Panc1 (cell line): ENCODE measurements at regions of chr19 and their contacts with region 1.

Region 1: GRCh38 chr19:47225746-47226425 is 5.1 kb downstream of the BBC3 start:
- DNase-seq: no peak
- ATAC-seq: peak; percentile 62
- H3K4me3 ChIP-seq: peak overlapping the region; percentile 23 to 65; a peak in 3 of 4 replicates
- H3K27ac ChIP-seq: peak overlapping the region; percentile 95
- H3K4me1 ChIP-seq: peaks cover 16% of the 10 kb centered on the region
- H3K27me3 ChIP-seq: no peaks in the 10 kb centered on the region
- CTCF ChIP-seq: no peak; the same call in 1 of the 2 replicates

Region 2: DNA sequence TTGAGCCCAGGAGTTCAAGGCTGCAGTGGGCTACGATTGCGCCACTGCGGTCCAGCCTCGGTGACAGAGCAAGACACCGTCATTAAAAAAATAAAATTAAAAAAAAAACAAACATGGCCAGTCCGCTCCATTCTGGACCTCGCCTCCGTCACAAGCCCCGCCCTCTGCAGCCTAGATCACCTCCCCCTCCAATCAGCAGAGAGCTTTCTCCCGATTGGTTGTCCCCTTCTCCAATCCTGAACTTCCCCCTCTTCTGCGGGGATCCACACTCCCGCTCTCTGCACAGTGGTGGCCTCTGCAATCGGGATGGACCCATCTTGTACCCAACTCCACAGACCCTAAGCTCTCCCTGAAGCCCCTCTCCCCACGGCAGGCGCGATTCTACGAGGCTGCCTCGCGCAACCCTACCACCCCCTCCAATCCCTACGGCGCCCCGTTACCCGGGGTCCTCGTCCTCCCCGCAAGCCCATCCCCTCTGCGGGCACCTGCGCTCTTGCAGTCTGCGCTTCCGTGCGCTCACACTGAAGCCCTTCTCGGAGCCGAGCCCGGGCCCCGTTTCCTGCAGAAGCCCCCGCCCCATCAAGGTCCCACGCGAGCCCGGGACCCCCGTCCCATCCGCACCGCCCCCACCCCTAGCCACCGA is 178.0 kb before region 1 on chr19:
- CTCF ChIA-PET with region 1: no interaction called
- POLR2A ChIA-PET with region 1: no interaction called
- in situ Hi-C with region 1: no loop called
- intact Hi-C with region 1: loop called (anchors 10 kb)
- DNase-seq: no peak
- ATAC-seq: peak; percentile 87
- H3K4me3 ChIP-seq: peak overlapping the region; percentile 68 to 74
- H3K27ac ChIP-seq: peak overlapping the region; percentile 72
- H3K4me1 ChIP-seq: no peaks in the 10 kb centered on the region
- H3K27me3 ChIP-seq: no peaks in the 10 kb centered on the region
- CTCF ChIP-seq: no peak